ENCODE measurements at regions of chr6 and their contacts with region 1.

Region 1: DNA sequence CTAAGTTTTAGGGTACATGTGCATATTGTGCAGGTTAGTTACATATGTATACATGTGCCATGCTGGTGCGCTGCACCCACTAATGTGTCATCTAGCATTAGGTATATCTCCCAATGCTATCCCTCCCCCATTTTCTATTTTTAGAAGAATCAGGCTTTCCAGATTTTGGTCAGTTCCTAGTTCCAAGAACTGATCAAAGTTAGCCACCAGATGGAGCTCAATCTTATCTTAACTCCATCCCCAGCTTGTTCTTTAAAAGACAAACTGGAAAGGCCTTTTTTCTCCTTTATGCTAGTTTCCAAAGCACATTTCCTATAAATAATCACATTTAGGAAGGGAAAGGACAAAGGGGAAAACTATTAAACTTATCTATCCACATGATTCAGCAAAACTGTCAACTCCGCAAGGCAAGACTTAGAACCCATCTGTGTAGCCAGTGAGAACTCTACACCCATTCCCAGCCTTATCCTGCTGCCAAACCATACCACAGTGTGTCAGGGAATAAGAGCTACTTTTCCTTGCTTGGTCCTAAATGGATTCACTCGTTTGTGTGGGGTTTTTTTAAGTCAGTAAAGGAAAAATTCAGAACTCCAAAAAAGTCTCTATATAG is 22.8 kb upstream of the KHDC1 start:
- DNase-seq: peak; percentile 60
- ATAC-seq: peak; percentile 68
- H3K4me3 ChIP-seq: no peak overlapping the region
- H3K27ac ChIP-seq: no peak overlapping the region
- H3K4me1 ChIP-seq: peaks cover 3% of the 10 kb centered on the region; the same call in 1 of the 2 replicates
- H3K27me3 ChIP-seq: no peaks in the 10 kb centered on the region
- CTCF ChIP-seq: peak; percentile 54

Region 2: DNA sequence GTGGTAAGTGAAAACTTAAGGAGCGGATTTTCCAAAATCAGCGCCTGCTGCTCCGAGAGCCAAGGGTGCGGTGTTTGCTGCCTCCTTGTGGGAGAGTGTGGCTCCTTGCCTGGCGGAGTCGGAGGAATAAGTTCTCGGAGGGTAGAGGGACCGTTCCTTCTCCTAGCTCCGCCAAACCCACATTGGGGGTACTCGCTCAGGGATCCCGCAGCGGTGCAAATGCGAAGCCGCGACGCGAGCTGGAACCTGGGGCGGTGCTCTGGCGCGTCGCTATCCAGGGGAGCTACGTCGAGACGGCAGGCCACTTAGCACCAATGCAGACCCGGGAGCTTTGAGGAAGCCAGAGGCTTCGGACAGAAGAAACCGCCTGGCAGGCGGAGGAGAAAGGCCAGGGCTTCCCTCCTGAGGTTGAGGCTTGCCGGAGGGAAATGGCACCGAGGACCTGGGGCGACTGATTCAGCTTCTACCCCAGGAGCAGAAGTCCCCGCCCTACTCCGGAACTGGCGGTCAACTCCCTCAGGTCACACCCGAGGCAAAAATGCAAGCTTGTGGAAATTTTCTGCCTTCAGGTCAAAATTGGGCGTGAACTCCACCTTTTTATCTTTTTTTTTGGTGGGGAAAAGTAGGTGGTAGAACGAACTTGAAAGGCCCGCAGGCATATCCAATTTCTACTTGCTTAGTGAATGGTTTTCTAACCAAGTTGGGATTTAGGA is 103.2 kb after region 1 on chr6:
- CTCF ChIA-PET with region 1: interaction called, 4 read pairs
- POLR2A ChIA-PET with region 1: no interaction called
- intact Hi-C with region 1: loop called (anchors 5 kb)
- DNase-seq: peak; percentile 77
- ATAC-seq: peak; percentile 87
- H3K4me3 ChIP-seq: peak overlapping the region; percentile 79
- H3K27ac ChIP-seq: peak overlapping the region; percentile 85
- H3K4me1 ChIP-seq: no peaks in the 10 kb centered on the region
- H3K27me3 ChIP-seq: no peaks in the 10 kb centered on the region
- CTCF ChIP-seq: peak; percentile 73

Measured in PC-3 (cell line).